ENCODE measurements at regions of chr2 and their contacts with region 1.

Region 1: GRCh38 chr2:143217512-143218115 is 88.4 kb downstream of the ARHGAP15 start:
- DNase-seq: no peak
- H3K4me3 ChIP-seq: no peak overlapping the region
- H3K27ac ChIP-seq: no peak overlapping the region
- H3K4me1 ChIP-seq: no peaks in the 10 kb centered on the region
- H3K27me3 ChIP-seq: no peaks in the 10 kb centered on the region
- CTCF ChIP-seq: no peak

Region 2: DNA sequence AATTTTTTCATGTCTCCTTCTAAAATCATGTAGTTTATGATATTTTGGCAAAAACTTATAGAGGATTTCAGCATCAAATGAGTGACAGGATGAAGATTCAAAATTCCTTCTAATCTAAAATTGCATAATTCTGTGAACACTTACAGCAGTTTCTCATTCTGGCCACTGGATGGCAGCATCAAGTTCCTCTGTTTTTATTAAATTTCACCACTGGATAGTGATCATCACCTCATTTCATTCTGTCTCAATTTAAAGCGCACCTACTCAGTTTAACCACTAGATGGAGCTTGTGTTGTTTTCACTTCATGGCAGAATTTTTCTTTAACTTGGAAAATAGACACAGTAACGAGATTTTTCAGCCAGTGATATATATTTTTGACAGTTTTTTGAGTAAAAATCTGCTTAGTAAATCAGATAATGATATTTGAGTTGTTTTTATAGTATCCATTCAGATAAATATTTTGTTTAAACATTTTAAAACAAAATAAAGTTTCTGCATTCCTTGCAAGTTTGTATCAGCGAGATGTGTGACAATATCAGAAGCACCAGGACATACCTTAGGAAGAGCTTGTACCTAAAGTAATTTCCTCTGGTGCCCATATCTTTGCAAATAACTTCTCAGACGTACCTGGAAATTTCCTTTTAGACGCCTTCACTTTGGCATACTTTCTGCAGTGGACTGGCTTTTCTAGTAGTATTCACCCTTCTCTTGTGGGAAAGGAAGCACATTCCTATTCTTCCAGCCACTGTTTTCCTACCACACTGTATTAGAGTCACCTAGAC is 183.1 kb before region 1 on chr2:
- CTCF ChIA-PET with region 1: interaction called, 3 read pairs
- POLR2A ChIA-PET with region 1: no interaction called
- intact Hi-C with region 1: loop called (anchors 1 kb)
- DNase-seq: peak; percentile 50 to 70
- H3K4me3 ChIP-seq: no peak overlapping the region
- H3K27ac ChIP-seq: no peak overlapping the region
- H3K4me1 ChIP-seq: no peaks in the 10 kb centered on the region
- H3K27me3 ChIP-seq: no peaks in the 10 kb centered on the region
- CTCF ChIP-seq: peak; percentile 94

Region 3: GRCh38 chr2:143110758-143111428 is 106.7 kb before region 1 on chr2:
- CTCF ChIA-PET with region 1: no interaction called
- POLR2A ChIA-PET with region 1: no interaction called
- intact Hi-C with region 1: loop called (anchors 1 kb)
- DNase-seq: peak in 1 of 2 experiments; percentile 33
- H3K4me3 ChIP-seq: no peak overlapping the region
- H3K27ac ChIP-seq: no peak overlapping the region
- H3K4me1 ChIP-seq: no peaks in the 10 kb centered on the region
- H3K27me3 ChIP-seq: no peaks in the 10 kb centered on the region
- CTCF ChIP-seq: peak; percentile 79

Region 4: DNA sequence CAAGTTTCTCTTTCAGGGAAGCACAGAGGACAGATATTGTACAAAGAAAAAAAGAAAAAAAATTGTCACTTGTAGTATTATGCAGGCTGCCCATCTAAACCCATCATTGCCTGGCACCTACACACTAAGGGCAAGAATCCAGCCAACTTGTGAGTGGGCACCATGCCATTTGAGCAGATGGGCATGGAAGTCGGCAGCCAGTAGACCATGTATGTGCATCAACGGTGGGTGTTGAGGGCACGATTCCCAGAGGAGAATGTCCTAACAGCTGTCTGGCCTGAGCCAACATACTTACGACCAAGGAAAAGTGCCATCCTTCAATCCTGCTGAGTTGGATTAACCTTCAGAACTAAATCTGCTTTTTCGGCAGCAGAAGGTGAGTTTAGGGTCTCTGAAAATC is 24.5 kb before region 1 on chr2:
- CTCF ChIA-PET with region 1: no interaction called
- POLR2A ChIA-PET with region 1: no interaction called
- intact Hi-C with region 1: no loop called
- DNase-seq: no peak
- H3K4me3 ChIP-seq: no peak overlapping the region
- H3K27ac ChIP-seq: no peak overlapping the region
- H3K4me1 ChIP-seq: no peaks in the 10 kb centered on the region
- H3K27me3 ChIP-seq: no peaks in the 10 kb centered on the region
- CTCF ChIP-seq: no peak

Region 5: GRCh38 chr2:143230506-143231253 is 13.1 kb after region 1 on chr2:
- CTCF ChIA-PET with region 1: no interaction called
- POLR2A ChIA-PET with region 1: no interaction called
- intact Hi-C with region 1: no loop called
- DNase-seq: no peak
- H3K4me3 ChIP-seq: no peak overlapping the region
- H3K27ac ChIP-seq: no peak overlapping the region
- H3K4me1 ChIP-seq: no peaks in the 10 kb centered on the region
- H3K27me3 ChIP-seq: no peaks in the 10 kb centered on the region
- CTCF ChIP-seq: no peak

Region 6: GRCh38 chr2:143329288-143329687 is 111.7 kb after region 1 on chr2:
- CTCF ChIA-PET with region 1: no interaction called
- POLR2A ChIA-PET with region 1: no interaction called
- intact Hi-C with region 1: no loop called
- DNase-seq: no peak
- H3K4me3 ChIP-seq: no peak overlapping the region
- H3K27ac ChIP-seq: no peak overlapping the region
- H3K4me1 ChIP-seq: no peaks in the 10 kb centered on the region
- H3K27me3 ChIP-seq: no peaks in the 10 kb centered on the region
- CTCF ChIP-seq: no peak

Measured in PC-9 (cell line).